B cell (primary cell): ENCODE measurements at regions of chr14 and their contacts with region 1.

Region 1: DNA sequence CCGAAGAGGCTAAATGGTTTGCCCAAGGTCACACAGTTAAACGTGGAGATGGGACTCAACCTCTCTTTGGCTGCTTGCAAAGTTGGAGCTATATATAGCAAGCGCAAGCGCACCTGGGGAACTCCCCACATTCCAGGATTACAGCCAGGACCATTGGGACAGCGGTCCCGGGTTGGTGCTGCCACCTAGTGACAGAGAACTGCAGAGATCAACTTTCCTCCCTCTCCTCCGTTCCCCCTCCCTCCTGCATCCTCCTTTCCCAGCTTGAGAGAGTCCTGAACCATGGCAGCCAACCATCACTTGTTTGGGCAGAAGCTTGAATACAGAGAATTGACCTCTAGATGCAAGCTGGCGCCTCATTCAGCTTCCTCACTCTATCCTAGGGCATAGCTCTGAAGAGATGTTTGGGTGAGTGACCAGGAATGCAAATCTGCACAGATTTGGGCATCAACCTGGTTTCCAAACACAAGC is 17.4 kb upstream of the FLVCR2 start:
- DNase-seq: peak; percentile 65
- ATAC-seq: peak; percentile 66
- H3K4me3 ChIP-seq: no peak overlapping the region
- H3K4me3 Mint-ChIP-seq: no peak overlapping the region
- H3K27ac ChIP-seq: no peak overlapping the region
- H3K27ac Mint-ChIP-seq: no peak overlapping the region
- H3K4me1 ChIP-seq: peaks cover 6 to 8% of the 10 kb centered on the region in 2 donors
- H3K4me1 Mint-ChIP-seq: peaks cover 10% of the 10 kb centered on the region
- H3K27me3 ChIP-seq: no peaks in the 10 kb centered on the region
- H3K27me3 Mint-ChIP-seq: no peaks in the 10 kb centered on the region
- CTCF ChIP-seq: peak; percentile 82

Region 2: DNA sequence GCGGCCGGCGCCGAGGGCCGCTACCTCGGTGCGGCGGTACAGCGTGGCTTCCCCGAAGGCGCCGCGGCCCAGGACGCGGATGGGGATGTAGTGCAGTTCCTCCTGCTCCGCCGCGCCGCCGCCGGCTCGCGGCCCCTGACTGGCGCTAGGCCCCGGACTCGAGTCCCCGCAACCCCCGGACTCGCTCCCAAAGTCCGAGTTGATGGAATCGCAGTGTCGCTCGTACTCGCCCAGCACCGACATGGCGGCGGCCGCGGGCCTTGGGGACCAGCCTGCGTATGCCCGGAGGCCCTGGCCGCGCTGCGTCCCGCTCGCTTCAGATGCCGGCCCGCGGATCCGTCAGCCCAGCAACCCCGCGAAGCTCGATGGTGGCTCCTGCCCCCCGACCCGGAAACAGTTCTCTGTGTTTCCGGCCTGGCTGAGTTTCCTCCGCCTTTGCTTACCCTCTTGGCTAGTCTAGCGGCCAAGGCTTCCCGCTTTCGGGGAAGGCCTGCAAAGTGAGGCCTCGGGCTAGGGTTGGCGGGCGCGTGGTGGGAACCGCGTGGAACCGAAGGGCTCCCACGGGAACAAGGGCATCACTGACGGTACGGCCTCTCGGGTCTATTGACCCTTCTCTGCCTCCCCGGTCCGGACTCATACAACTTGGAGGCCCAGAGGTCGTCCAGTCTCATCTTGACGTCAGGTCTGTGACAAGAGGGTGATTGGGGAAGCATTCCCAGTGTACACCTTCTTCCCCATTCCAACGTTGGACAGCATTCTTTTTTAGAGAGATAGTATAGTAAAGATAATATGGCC is 434.1 kb before region 1 on chr14 and contains the start of gene NEK9:
- CTCF ChIA-PET with region 1: interaction called, 5 read pairs
- POLR2A ChIA-PET with region 1: no interaction called
- intact Hi-C with region 1: loop called (anchors 5 kb)
- DNase-seq: peak; percentile 94
- ATAC-seq: peak; percentile 84
- H3K4me3 ChIP-seq: peak within 1 kb of the TSS; percentile 67 to 88 (median 73)
- H3K4me3 Mint-ChIP-seq: peak within 1 kb of the TSS; percentile 99
- H3K27ac ChIP-seq: peak within 1 kb of the TSS; percentile 82 to 94
- H3K27ac Mint-ChIP-seq: peak within 1 kb of the TSS; percentile 99
- H3K4me1 ChIP-seq: peaks cover 17 to 21% of the 10 kb centered on the region in 2 donors
- H3K4me1 Mint-ChIP-seq: peaks cover 36% of the 10 kb centered on the region
- H3K27me3 ChIP-seq: no peaks in the 10 kb centered on the region
- H3K27me3 Mint-ChIP-seq: no peaks in the 10 kb centered on the region
- CTCF ChIP-seq: no peak
- total RNA-seq, gene NEK9: 110 and 116 TPM in 2 replicates

Region 3: DNA sequence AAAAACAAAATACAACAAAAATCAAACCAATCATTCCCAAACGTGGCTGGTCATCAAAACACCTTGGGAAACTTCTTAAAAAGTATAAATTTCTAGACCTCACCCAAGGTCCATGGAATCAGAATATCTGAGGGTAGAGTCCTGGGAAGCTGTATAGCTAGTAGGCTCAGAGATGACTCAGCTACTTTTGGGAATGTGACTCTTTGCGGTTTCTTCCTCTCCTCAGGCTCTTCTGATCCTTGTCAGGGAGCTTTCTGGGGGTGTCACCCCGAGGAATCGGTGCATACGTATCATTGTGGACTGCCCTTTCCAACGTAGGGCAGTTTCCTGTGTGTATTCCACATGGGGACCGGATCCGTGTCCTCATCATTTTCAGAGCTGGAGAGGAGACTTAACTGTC is 118.4 kb before region 1 on chr14:
- CTCF ChIA-PET with region 1: interaction called, 11 read pairs
- POLR2A ChIA-PET with region 1: no interaction called
- intact Hi-C with region 1: no loop called
- DNase-seq: no peak
- ATAC-seq: no peak
- H3K4me3 ChIP-seq: no peak overlapping the region
- H3K4me3 Mint-ChIP-seq: no peak overlapping the region
- H3K27ac ChIP-seq: no peak overlapping the region
- H3K27ac Mint-ChIP-seq: no peak overlapping the region
- H3K4me1 ChIP-seq: peaks cover 0 to 15% of the 10 kb centered on the region in 2 donors
- H3K4me1 Mint-ChIP-seq: peaks cover 31% of the 10 kb centered on the region
- H3K27me3 ChIP-seq: no peaks in the 10 kb centered on the region
- H3K27me3 Mint-ChIP-seq: no peaks in the 10 kb centered on the region
- CTCF ChIP-seq: no peak

Region 4: GRCh38 chr14:75497191-75497590 is 63.8 kb before region 1 on chr14:
- CTCF ChIA-PET with region 1: interaction called, 45 read pairs
- POLR2A ChIA-PET with region 1: no interaction called
- intact Hi-C with region 1: no loop called
- DNase-seq: peak; percentile 45
- ATAC-seq: peak; percentile 82
- H3K4me3 ChIP-seq: no peak overlapping the region
- H3K4me3 Mint-ChIP-seq: peak overlapping the region; percentile 23
- H3K27ac ChIP-seq: no peak overlapping the region
- H3K27ac Mint-ChIP-seq: no peak overlapping the region
- H3K4me1 ChIP-seq: peaks cover 10 to 23% of the 10 kb centered on the region in 2 donors
- H3K4me1 Mint-ChIP-seq: peaks cover 33% of the 10 kb centered on the region
- H3K27me3 ChIP-seq: no peaks in the 10 kb centered on the region
- H3K27me3 Mint-ChIP-seq: no peaks in the 10 kb centered on the region
- CTCF ChIP-seq: no peak

Region 5: GRCh38 chr14:75531660-75532317 is 29.2 kb before region 1 on chr14:
- CTCF ChIA-PET with region 1: interaction called, 22 read pairs
- POLR2A ChIA-PET with region 1: no interaction called
- intact Hi-C with region 1: no loop called
- DNase-seq: no peak
- ATAC-seq: no peak
- H3K4me3 ChIP-seq: no peak overlapping the region
- H3K4me3 Mint-ChIP-seq: no peak overlapping the region
- H3K27ac ChIP-seq: no peak overlapping the region
- H3K27ac Mint-ChIP-seq: no peak overlapping the region
- H3K4me1 ChIP-seq: no peaks in the 10 kb centered on the region
- H3K4me1 Mint-ChIP-seq: peaks cover 39% of the 10 kb centered on the region
- H3K27me3 ChIP-seq: no peaks in the 10 kb centered on the region
- H3K27me3 Mint-ChIP-seq: no peaks in the 10 kb centered on the region
- CTCF ChIP-seq: no peak

Region 6: DNA sequence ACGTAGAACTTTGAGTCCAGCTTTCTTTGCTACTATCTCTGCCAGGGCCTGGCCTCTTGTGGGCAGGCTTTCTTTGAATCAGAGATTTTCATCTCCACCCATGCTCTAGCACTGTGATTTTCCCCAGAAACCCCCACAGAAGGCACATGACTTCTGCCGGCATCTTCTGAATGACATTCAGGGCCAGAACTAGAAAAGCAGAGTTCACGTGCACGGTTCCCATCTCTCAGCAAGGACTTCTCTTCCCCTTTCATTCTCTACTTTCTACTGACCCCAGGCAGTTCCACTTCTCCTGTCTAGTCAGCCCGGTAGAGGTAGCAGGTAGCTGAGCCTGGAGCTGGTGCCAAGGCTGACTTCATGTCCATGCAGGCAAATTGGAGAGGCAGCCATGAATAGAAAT is 11.8 kb before region 1 on chr14:
- CTCF ChIA-PET with region 1: interaction called, 60 read pairs
- POLR2A ChIA-PET with region 1: no interaction called
- intact Hi-C with region 1: no loop called
- DNase-seq: peak; percentile 68
- ATAC-seq: peak; percentile 80
- H3K4me3 ChIP-seq: no peak overlapping the region
- H3K4me3 Mint-ChIP-seq: peak overlapping the region; percentile 72
- H3K27ac ChIP-seq: no peak overlapping the region
- H3K27ac Mint-ChIP-seq: peak overlapping the region; percentile 88
- H3K4me1 ChIP-seq: peaks cover 6 to 12% of the 10 kb centered on the region in 2 donors
- H3K4me1 Mint-ChIP-seq: peaks cover 25% of the 10 kb centered on the region
- H3K27me3 ChIP-seq: no peaks in the 10 kb centered on the region
- H3K27me3 Mint-ChIP-seq: no peaks in the 10 kb centered on the region
- CTCF ChIP-seq: no peak

Region 7: GRCh38 chr14:75654127-75654732 is 93.2 kb after region 1 on chr14:
- CTCF ChIA-PET with region 1: interaction called, 11 read pairs
- POLR2A ChIA-PET with region 1: no interaction called
- intact Hi-C with region 1: no loop called
- DNase-seq: peak; percentile 82
- ATAC-seq: peak; percentile 96
- H3K4me3 ChIP-seq: no peak overlapping the region
- H3K4me3 Mint-ChIP-seq: no peak overlapping the region
- H3K27ac ChIP-seq: no peak overlapping the region
- H3K27ac Mint-ChIP-seq: no peak overlapping the region
- H3K4me1 ChIP-seq: no peaks in the 10 kb centered on the region
- H3K4me1 Mint-ChIP-seq: peaks cover 4% of the 10 kb centered on the region
- H3K27me3 ChIP-seq: no peaks in the 10 kb centered on the region
- H3K27me3 Mint-ChIP-seq: no peaks in the 10 kb centered on the region
- CTCF ChIP-seq: peak; percentile 94